ENCODE measurements at regions of chr2 and their contacts with region 1.

Region 1: GRCh38 chr2:113309655-113310387 is 31.1 kb upstream of the PAX8 start:
- DNase-seq: no peak
- H3K4me3 ChIP-seq: no peak overlapping the region
- H3K27ac ChIP-seq: no peak overlapping the region
- H3K4me1 ChIP-seq: no peaks in the 10 kb centered on the region
- H3K27me3 ChIP-seq: no peaks in the 10 kb centered on the region
- CTCF ChIP-seq: no peak
- POLR2A ChIP-seq: no peak

Region 2: GRCh38 chr2:113282747-113283533 is 26.9 kb before region 1 on chr2:
- intact Hi-C with region 1: loop called (anchors 2 kb)
- DNase-seq: peak in 1 of 2 donors; percentile 67
- H3K4me3 ChIP-seq: no peak overlapping the region
- H3K27ac ChIP-seq: peak overlapping the region; percentile 69 to 80
- H3K4me1 ChIP-seq: no peaks in the 10 kb centered on the region
- H3K27me3 ChIP-seq: peaks cover 0 to 7% of the 10 kb centered on the region in 2 donors
- CTCF ChIP-seq: peak in 2 of 3 donors; percentile 20 to 27
- POLR2A ChIP-seq: no peak

Measured in breast epithelium (tissue), 4 donors.